ENCODE measurements at regions of chr10 and their contacts with region 1.

Region 1: GRCh38 chr10:83603708-83604107 is 535.6 kb upstream of the GHITM start:
- DNase-seq: no peak
- H3K4me3 Mint-ChIP-seq: no peak overlapping the region
- H3K27ac Mint-ChIP-seq: no peak overlapping the region
- H3K4me1 Mint-ChIP-seq: peaks cover 3% of the 10 kb centered on the region
- H3K27me3 Mint-ChIP-seq: no peaks in the 10 kb centered on the region

Region 2: DNA sequence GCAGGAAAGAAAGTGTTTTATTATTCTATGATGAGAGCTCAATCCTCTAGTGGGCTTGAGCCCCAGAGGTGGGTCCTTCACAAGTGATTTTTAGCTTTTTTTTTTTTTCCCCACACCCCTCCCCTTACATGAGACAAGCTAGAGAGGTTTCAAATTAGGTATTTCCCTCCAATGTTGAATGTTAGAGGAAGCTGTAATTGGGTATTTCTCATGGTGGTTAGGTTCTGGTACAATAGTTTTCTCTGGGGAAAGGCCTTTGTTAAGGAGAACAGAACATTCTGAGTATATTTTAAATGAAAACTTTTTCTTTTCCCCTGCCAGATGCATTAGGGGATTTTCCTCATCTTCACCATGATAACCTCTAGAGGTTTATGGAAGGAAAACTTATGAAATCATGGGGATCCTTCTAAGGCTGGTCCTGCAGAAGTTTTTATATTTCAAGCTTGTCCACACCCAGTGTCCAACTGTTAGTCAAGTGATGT is 689.0 kb before region 1 on chr10:
- intact Hi-C with region 1: no loop called
- DNase-seq: no peak
- H3K4me3 Mint-ChIP-seq: no peak overlapping the region
- H3K27ac Mint-ChIP-seq: no peak overlapping the region
- H3K4me1 Mint-ChIP-seq: no peaks in the 10 kb centered on the region
- H3K27me3 Mint-ChIP-seq: no peaks in the 10 kb centered on the region

Region 3: GRCh38 chr10:83680470-83680891 is 76.8 kb after region 1 on chr10:
- intact Hi-C with region 1: loop called (anchors 10 kb)
- DNase-seq: peak; percentile 83
- H3K4me3 Mint-ChIP-seq: no peak overlapping the region
- H3K27ac Mint-ChIP-seq: peak overlapping the region; percentile 57
- H3K4me1 Mint-ChIP-seq: peaks cover 15% of the 10 kb centered on the region
- H3K27me3 Mint-ChIP-seq: peaks cover 2% of the 10 kb centered on the region

Region 4: DNA sequence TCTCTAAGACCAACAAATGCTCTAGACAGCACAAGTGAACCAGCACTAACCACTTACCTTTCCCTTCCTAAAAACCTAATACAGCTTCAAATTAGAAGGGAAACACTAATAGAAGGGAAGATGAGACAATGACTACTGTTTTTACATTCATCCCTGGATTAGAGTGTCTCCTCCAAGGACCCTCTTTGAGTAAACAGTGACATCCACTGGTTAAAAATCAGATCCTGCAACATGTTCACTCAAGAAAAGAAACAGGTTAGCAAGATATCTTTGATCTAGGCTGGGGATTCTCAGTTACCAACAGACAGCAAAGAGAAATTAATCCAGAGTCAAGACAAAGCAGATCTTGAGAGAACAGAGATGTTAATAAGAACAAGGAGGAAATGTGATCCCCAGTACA is 357.9 kb after region 1 on chr10:
- intact Hi-C with region 1: no loop called
- DNase-seq: no peak
- H3K4me3 Mint-ChIP-seq: no peak overlapping the region
- H3K27ac Mint-ChIP-seq: no peak overlapping the region
- H3K4me1 Mint-ChIP-seq: no peaks in the 10 kb centered on the region
- H3K27me3 Mint-ChIP-seq: no peaks in the 10 kb centered on the region